H1 (cell line): ENCODE measurements at regions of chr3 and their contacts with region 1.

Region 1: DNA sequence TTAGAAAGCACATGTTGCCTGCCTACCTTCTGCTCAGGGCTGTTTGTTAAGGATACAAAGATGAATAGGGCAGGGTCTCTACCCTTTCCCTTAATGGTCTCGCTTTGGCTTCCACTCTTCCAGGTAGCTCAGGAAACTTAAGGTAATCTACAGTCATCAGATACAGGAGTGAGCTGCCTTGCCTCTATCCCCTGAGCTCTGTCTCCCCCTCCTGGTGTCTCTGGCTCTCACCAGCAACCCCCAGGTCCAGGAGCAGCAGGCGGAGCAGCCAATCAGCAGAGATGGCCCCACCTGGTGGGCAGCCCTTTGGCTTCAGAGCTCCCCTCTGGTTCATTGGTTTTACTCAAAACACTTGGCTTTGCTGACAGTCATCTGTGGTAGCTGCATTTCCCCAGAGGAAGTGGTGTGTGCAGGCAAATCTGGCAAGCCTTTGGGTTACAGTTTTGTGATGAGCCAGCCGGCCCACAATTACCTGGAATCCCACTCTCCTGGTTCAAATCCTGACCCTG is 8.5 kb upstream of the CX3CR1 start:
- DNase-seq: peak; percentile 90 to 91
- H3K4me3 ChIP-seq: no peak overlapping the region
- H3K27ac ChIP-seq: no peak overlapping the region
- H3K4me1 ChIP-seq: no peaks in the 10 kb centered on the region
- H3K27me3 ChIP-seq: no peaks in the 10 kb centered on the region
- CTCF ChIP-seq: peak; percentile 93 to 99 (median 99)
- EP300 ChIP-seq: no peak
- POLR2A ChIP-seq: no peak
- RAD21 ChIP-seq: peak; percentile 100

Region 2: GRCh38 chr3:39107388-39108199 is 180.8 kb before region 1 on chr3 and contains the starts of genes GORASP1 and TTC21A:
- CTCF ChIA-PET with region 1: interaction called, 106 read pairs
- POLR2A ChIA-PET with region 1: interaction called, 3 read pairs
- DNase-seq: peak in 1 of 2 experiments; percentile 86
- H3K4me3 ChIP-seq: peak within 1 kb of the TSS; percentile 77 to 92 (median 84)
- H3K27ac ChIP-seq: no peak within 1 kb of the TSS
- H3K4me1 ChIP-seq: no peaks in the 10 kb centered on the region; a peak in 2 of 7 replicates
- H3K27me3 ChIP-seq: peaks cover 0 to 8% (median 3%) of the 10 kb centered on the region in 4 experiments; a peak in 2 of 7 replicates
- CTCF ChIP-seq: no peak
- EP300 ChIP-seq: no peak
- POLR2A ChIP-seq: no peak
- RAD21 ChIP-seq: peak in 1 of 2 experiments; percentile 2; a peak in 1 of 4 replicates
- total RNA-seq, gene GORASP1: 33.4 and 39.3 TPM in 2 replicates
- total RNA-seq, gene TTC21A: 1.7 and 2.8 TPM in 2 replicates

Region 3: DNA sequence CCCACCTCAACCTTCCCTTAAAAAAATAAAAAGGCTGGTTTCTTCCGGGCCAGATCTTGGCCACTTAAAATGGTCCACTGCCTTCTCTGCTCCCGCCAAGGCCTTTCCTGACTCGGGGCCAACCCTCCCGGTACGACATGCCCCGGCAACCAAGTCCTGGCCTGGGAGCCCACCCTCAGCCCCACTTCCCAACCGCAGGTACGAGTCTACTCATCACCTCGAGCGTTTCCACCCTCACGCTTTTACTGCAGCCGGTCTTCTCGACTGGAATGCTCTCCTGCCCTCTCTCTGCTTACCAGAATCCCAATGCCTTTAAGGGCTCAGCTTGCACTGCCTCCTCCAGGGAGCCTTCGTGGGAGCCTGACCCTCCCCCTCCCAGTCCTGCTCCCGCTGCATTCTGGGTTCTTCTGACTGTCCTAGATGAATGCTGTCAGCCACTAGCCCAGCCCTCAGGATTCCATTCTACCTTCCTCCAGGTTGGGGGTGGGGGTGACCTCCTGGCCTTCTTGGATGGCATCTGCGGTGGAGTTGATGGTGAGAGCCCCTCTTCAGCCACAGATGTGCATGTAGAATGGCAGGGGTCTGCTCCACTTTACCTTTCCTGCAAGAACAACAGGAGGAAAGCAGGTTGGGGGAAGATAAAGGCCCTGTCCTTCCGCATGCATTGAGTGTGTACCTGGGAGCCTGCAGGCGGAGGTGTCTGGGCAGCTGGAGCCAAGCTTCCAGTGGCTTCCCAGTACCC is 133.9 kb before region 1 on chr3:
- CTCF ChIA-PET with region 1: interaction called, 22 read pairs
- POLR2A ChIA-PET with region 1: interaction called, 4 read pairs
- DNase-seq: peak; percentile 84 to 85
- H3K4me3 ChIP-seq: peak overlapping the region; percentile 50 to 85 (median 60)
- H3K27ac ChIP-seq: peak overlapping the region; percentile 78
- H3K4me1 ChIP-seq: peaks cover 22 to 40% (median 26%) of the 10 kb centered on the region in 4 experiments
- H3K27me3 ChIP-seq: no peaks in the 10 kb centered on the region
- CTCF ChIP-seq: no peak
- EP300 ChIP-seq: no peak
- POLR2A ChIP-seq: peak in 1 of 2 experiments; percentile 79; a peak in 1 of 3 replicates
- RAD21 ChIP-seq: 0 out of 4 replicates have a peak, but pooled peaks have one; percentile 2 to 13

Region 4: DNA sequence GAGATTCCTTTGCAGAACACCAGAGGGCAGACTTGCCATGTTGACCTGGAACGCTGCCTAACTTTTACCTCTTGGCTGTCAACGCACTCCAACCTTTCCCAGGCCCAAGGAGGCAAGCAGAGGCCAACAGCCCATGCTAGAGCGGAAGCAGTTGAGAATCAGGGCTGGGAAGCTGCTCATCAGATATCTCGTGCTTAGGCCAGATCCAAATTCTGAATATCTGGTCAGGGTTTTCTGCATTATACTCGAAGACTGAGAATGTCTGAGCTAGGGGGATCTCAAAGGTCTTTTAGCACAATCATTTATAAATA is 98.4 kb before region 1 on chr3:
- CTCF ChIA-PET with region 1: interaction called, 767 read pairs
- POLR2A ChIA-PET with region 1: interaction called, 5 read pairs
- DNase-seq: peak in 1 of 2 experiments; percentile 73
- H3K4me3 ChIP-seq: no peak overlapping the region
- H3K27ac ChIP-seq: no peak overlapping the region
- H3K4me1 ChIP-seq: no peaks in the 10 kb centered on the region
- H3K27me3 ChIP-seq: no peaks in the 10 kb centered on the region
- CTCF ChIP-seq: peak in 2 of 3 experiments; percentile 91 to 93; a peak in 3 of 4 replicates
- EP300 ChIP-seq: no peak
- POLR2A ChIP-seq: no peak
- RAD21 ChIP-seq: peak; percentile 93 to 96

Region 5: DNA sequence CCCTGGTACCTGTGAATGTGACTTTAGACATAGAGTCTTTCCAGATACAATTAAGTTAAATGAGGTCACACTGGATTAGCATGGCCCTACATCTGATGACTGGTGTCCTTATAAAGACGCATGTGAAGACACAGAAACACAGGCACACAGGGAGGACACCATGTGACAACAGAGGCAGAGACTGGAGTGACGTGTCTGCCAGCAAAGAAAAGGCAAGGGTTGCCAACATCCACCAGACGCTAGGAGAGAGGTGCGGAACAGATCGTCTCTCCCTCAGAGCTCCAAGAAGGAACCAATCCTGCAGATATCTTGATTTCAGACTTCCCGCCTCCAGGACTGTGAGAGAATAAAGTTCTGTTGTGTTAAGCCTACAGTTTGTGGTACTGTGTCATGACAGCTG is 51.3 kb before region 1 on chr3:
- CTCF ChIA-PET with region 1: interaction called, 10 read pairs
- POLR2A ChIA-PET with region 1: no interaction called
- DNase-seq: no peak
- H3K4me3 ChIP-seq: no peak overlapping the region
- H3K27ac ChIP-seq: no peak overlapping the region
- H3K4me1 ChIP-seq: no peaks in the 10 kb centered on the region
- H3K27me3 ChIP-seq: no peaks in the 10 kb centered on the region
- CTCF ChIP-seq: no peak
- EP300 ChIP-seq: no peak
- POLR2A ChIP-seq: no peak
- RAD21 ChIP-seq: no peak

Region 6: DNA sequence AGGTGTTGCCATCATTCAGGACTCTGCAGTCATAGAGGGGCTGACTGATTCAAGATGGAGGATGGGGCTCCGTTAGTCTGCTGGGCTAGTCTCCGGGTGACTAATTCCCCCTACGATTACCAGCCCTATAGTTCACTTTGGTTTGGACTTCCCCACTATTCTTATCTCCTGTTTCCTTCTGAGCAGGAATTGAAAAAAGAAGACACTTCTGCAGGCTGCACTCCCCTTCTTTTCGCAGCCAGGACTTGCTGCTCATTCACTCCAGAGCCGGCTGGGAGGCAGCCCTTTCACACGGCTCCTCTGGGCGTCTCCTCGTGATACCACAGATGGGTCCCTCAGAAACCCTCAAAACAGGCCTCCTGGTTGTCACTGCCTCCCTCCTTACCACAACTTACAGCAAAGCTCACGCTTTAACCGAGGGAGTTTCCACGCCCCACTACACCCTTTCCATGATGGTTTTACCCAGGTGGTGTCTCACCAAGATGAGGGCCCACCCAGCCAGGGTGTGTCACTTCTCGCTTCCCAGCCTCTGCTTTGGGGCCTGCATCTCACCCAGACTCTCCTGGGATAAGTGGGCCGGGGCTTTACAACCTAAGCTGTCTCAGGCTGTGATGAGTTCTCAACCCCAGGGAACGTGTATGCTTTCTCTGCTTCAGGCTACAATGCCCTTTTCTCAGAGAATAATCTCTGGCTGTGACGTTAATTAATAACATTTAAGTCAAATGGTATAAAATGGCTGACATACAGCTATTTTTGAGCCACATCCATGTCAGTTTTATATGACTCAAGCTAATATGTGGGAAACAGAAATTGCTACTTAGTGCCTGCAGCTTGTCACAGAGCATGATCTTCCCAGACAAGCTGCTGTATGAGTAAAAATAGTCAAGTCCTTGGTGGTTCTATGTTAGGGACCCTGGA is 20.5 kb before region 1 on chr3:
- CTCF ChIA-PET with region 1: interaction called, 107 read pairs
- POLR2A ChIA-PET with region 1: no interaction called
- DNase-seq: no peak
- H3K4me3 ChIP-seq: no peak overlapping the region
- H3K27ac ChIP-seq: no peak overlapping the region
- H3K4me1 ChIP-seq: no peaks in the 10 kb centered on the region
- H3K27me3 ChIP-seq: no peaks in the 10 kb centered on the region
- CTCF ChIP-seq: no peak
- EP300 ChIP-seq: no peak
- POLR2A ChIP-seq: no peak
- RAD21 ChIP-seq: no peak

Region 7: DNA sequence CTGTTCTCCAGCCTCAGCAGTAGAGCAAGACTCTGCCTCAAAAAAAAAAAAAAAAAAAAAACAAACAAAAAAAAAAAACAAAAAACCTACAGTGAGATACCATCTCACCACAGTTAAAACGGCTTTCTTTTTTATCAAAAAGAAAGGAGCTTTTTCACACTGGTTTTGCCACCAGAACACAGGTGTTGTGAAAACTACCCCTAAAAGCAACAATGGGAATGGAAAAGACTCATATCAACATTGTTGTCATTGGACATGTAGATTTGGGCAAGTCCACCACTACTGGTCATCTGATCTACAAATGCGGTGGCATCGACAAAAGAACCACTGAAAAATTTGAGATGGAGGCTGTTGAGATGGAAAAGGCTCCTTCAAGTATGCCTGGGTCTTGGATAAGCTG is 70.0 kb after region 1 on chr3:
- CTCF ChIA-PET with region 1: no interaction called
- POLR2A ChIA-PET with region 1: no interaction called
- DNase-seq: no peak
- H3K4me3 ChIP-seq: no peak overlapping the region
- H3K27ac ChIP-seq: no peak overlapping the region
- H3K4me1 ChIP-seq: no peaks in the 10 kb centered on the region
- H3K27me3 ChIP-seq: no peaks in the 10 kb centered on the region
- CTCF ChIP-seq: no peak
- EP300 ChIP-seq: no peak
- POLR2A ChIP-seq: no peak
- RAD21 ChIP-seq: no peak

Region 8: DNA sequence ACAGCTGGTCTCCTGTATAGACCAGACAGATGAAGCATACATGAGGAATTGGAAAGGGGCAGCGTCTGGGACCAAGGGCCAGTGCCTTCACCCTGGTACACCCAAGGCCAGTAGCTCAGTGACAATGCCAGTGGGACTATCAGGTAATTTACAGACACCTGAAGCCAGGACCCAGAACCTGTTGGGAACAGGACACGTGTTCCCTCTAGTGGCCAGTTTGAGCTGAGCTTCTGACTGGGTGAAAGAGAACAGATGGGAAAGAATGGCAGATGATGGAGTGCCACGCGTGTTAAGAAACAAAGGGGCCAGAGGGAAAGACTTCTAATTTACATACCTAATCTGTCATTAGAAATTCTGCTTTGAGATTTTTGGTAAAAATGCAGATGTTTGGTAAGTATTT is 89.7 kb after region 1 on chr3:
- CTCF ChIA-PET with region 1: interaction called, 169 read pairs
- POLR2A ChIA-PET with region 1: interaction called, 3 read pairs
- DNase-seq: peak in 1 of 2 experiments; percentile 69
- H3K4me3 ChIP-seq: no peak overlapping the region
- H3K27ac ChIP-seq: no peak overlapping the region
- H3K4me1 ChIP-seq: peaks cover 0 to 5% (median 0%) of the 10 kb centered on the region in 4 experiments; a peak in 2 of 7 replicates
- H3K27me3 ChIP-seq: no peaks in the 10 kb centered on the region
- CTCF ChIP-seq: peak; percentile 79 to 93 (median 90)
- EP300 ChIP-seq: no peak
- POLR2A ChIP-seq: no peak
- RAD21 ChIP-seq: peak; percentile 86 to 93

Region 9: DNA sequence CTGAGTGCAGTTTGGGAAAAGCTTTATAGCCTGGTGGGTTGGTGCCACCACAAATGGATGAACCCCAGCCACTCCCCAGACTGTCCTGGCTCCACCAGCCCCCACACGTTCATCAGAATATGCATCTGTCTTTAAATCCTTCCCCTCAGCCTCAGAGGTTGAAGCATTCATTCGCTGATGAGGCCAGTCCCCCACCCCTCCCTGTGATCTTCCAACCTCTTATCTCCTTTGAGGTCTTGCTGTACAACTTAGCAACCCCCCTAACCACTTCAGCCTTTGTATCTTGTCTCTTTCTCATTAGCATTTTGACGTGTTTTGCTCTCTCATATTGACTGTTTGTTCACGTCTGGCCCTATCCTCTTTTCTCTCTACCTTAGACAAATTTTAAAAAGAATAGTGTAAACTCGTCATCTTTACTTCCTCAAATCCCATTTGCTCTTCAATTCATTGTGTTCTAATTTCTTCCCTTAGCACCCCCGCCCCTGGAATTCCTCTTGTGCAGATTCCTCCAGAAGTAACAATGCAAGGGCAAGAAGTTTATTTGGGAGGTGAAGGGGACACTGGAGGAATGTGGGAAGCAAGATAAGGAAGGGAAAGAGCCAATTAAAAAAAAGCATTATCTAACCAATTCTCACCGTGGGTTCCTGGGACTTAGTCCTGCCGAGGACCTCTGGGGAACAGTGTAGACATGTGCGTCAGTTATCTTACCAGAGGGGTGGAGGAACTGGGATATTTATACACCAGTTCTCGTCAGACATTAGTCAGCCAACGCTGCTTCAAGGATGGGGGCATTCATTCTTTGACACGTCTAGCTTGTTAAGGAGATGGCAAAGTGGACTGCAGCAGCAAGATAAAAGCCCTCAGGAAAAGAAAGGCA is 217.8 kb after region 1 on chr3:
- CTCF ChIA-PET with region 1: no interaction called
- POLR2A ChIA-PET with region 1: no interaction called
- DNase-seq: no peak
- H3K4me3 ChIP-seq: no peak overlapping the region; a peak in 1 of 8 replicates
- H3K27ac ChIP-seq: no peak overlapping the region
- H3K4me1 ChIP-seq: peaks cover 0 to 12% (median 4%) of the 10 kb centered on the region in 4 experiments; a peak in 6 of 7 replicates
- H3K27me3 ChIP-seq: peaks cover 4 to 13% (median 8%) of the 10 kb centered on the region in 4 experiments; a peak in 5 of 7 replicates
- CTCF ChIP-seq: no peak
- EP300 ChIP-seq: no peak
- POLR2A ChIP-seq: no peak
- RAD21 ChIP-seq: no peak

Region 10: GRCh38 chr3:39519554-39520288 is 231.4 kb after region 1 on chr3:
- CTCF ChIA-PET with region 1: no interaction called
- POLR2A ChIA-PET with region 1: no interaction called
- DNase-seq: no peak
- H3K4me3 ChIP-seq: no peak overlapping the region
- H3K27ac ChIP-seq: no peak overlapping the region
- H3K4me1 ChIP-seq: peaks cover 0 to 3% (median 1%) of the 10 kb centered on the region in 4 experiments; a peak in 3 of 7 replicates
- H3K27me3 ChIP-seq: no peaks in the 10 kb centered on the region
- CTCF ChIP-seq: no peak
- EP300 ChIP-seq: no peak
- POLR2A ChIP-seq: no peak
- RAD21 ChIP-seq: no peak